ENCODE measurements at regions of chr3 and their contacts with region 1.

Region 1: GRCh38 chr3:38479431-38480092 is 16.6 kb upstream of the EXOG start:
- DNase-seq: peak; percentile 60 to 81 (median 61)
- ATAC-seq: peak; percentile 78 to 87 (median 82)
- H3K4me3 ChIP-seq: no peak overlapping the region
- H3K27ac ChIP-seq: no peak overlapping the region
- H3K4me1 ChIP-seq: peaks cover 0 to 3% (median 0%) of the 10 kb centered on the region in 12 donors
- H3K27me3 ChIP-seq: no peaks in the 10 kb centered on the region
- CTCF ChIP-seq: peak; percentile 84 to 95 (median 90)
- POLR2A ChIP-seq: no peak

Region 2: GRCh38 chr3:38004415-38005076 is 475.0 kb before region 1 on chr3:
- intact Hi-C with region 1: loop called in 2 of 10 experiments (anchors 5 to 10 kb)
- DNase-seq: peak in 4 of 5 donors; percentile 64 to 87 (median 77)
- ATAC-seq: peak; percentile 62 to 76 (median 67)
- H3K4me3 ChIP-seq: peak overlapping the region in 7 of 12 donors; percentile 20 to 57 (median 46)
- H3K27ac ChIP-seq: peak overlapping the region in 11 of 12 donors; percentile 1 to 86 (median 62)
- H3K4me1 ChIP-seq: peaks cover 0 to 20% (median 9%) of the 10 kb centered on the region in 12 donors
- H3K27me3 ChIP-seq: no peaks in the 10 kb centered on the region
- CTCF ChIP-seq: peak; percentile 50 to 74 (median 67)
- POLR2A ChIP-seq: no peak

Region 3: DNA sequence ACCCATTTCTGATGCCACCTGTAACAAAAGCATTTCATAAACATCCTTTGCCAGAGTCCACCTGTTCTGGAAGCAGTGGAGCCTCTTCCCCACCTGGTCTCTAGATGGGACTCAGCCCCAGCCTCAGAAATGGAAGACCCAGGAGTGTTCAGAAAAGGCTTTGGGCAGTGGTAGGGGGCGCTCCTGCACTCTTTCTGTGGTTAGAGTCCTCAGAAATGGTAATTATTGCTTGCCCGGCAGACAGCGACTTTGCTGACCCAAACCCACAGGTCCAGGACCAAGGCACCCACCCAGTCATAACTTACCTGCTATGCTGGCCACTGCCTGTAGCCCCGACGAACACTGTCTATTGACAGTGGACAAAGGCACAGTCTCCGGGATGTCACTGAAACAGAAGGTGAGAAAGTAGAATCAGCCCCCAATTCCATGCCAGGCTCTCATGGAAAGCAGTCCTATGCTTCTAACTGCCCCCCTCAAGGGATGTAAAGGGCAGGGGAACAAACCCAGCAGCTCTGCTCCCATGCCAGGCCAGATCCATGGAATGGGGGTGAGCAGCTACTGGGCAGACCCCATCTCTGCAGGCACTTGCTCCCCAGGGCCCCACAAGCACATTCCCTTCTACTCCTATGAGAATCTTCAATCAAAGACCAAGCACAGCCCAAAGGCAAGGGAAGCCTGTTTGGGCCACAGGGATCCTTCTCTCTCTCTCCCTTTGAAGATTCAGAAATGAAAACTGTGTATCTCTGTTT is 347.8 kb before region 1 on chr3:
- intact Hi-C with region 1: loop called in 4 of 10 experiments (anchors 10 kb)
- DNase-seq: no peak
- ATAC-seq: no peak
- H3K4me3 ChIP-seq: no peak overlapping the region
- H3K27ac ChIP-seq: peak overlapping the region in 2 of 12 donors; percentile 10 to 64
- H3K4me1 ChIP-seq: peaks cover 0 to 61% (median 42%) of the 10 kb centered on the region in 12 donors
- H3K27me3 ChIP-seq: no peaks in the 10 kb centered on the region
- CTCF ChIP-seq: peak in 5 of 12 donors; percentile 3 to 31 (median 24)
- POLR2A ChIP-seq: no peak

Region 4: GRCh38 chr3:38257583-38257982 is 222.0 kb before region 1 on chr3:
- intact Hi-C with region 1: loop called in 2 of 10 experiments (anchors 10 kb)
- DNase-seq: no peak
- ATAC-seq: no peak
- H3K4me3 ChIP-seq: no peak overlapping the region
- H3K27ac ChIP-seq: no peak overlapping the region
- H3K4me1 ChIP-seq: no peaks in the 10 kb centered on the region
- H3K27me3 ChIP-seq: no peaks in the 10 kb centered on the region
- CTCF ChIP-seq: no peak
- POLR2A ChIP-seq: no peak

Region 5: DNA sequence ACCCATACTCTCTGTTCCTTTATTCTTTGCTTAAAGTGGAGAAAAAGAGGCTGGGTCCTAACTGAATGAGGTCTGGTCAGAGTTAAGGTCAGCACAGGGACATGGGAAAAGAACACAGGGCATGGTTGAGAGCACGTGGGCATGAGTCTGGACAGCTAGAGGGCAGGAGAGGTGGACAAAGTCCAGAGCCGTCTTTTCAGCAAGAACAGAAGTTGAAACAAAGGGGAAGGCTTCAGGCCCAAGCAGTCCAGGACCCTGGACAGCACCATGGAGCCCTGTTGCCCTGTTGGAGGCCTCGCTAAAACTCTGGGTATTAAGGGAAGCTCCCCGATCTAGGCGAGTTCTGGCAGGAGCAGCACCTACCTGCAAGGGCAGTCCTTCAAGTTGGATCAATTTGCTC is 82.2 kb before region 1 on chr3:
- intact Hi-C with region 1: loop called in 1 of 10 experiments (anchors 10 kb)
- DNase-seq: peak in 1 of 5 donors; percentile 33
- ATAC-seq: peak; percentile 37 to 64 (median 60)
- H3K4me3 ChIP-seq: no peak overlapping the region
- H3K27ac ChIP-seq: no peak overlapping the region
- H3K4me1 ChIP-seq: no peaks in the 10 kb centered on the region
- H3K27me3 ChIP-seq: no peaks in the 10 kb centered on the region
- CTCF ChIP-seq: no peak
- POLR2A ChIP-seq: no peak

Region 6: GRCh38 chr3:39118079-39118478 is 638.5 kb after region 1 on chr3:
- intact Hi-C with region 1: no loop called
- DNase-seq: no peak
- ATAC-seq: no peak
- H3K4me3 ChIP-seq: no peak overlapping the region
- H3K27ac ChIP-seq: no peak overlapping the region
- H3K4me1 ChIP-seq: peaks cover 0 to 5% (median 0%) of the 10 kb centered on the region in 12 donors
- H3K27me3 ChIP-seq: no peaks in the 10 kb centered on the region
- CTCF ChIP-seq: no peak
- POLR2A ChIP-seq: no peak